ENCODE measurements at regions of chr3 and their contacts with region 1.

Region 1: GRCh38 chr3:187738331-187739093 is 6.8 kb downstream of the BCL6 start:
- DNase-seq: peak; percentile 67
- H3K4me3 Mint-ChIP-seq: peak overlapping the region; percentile 96
- H3K27ac Mint-ChIP-seq: peak overlapping the region; percentile 92
- H3K4me1 Mint-ChIP-seq: peaks cover 71% of the 10 kb centered on the region
- H3K27me3 Mint-ChIP-seq: no peaks in the 10 kb centered on the region

Region 2: GRCh38 chr3:187227658-187228258 is 510.8 kb before region 1 on chr3:
- intact Hi-C with region 1: no loop called
- DNase-seq: no peak
- H3K4me3 Mint-ChIP-seq: no peak overlapping the region
- H3K27ac Mint-ChIP-seq: no peak overlapping the region
- H3K4me1 Mint-ChIP-seq: no peaks in the 10 kb centered on the region
- H3K27me3 Mint-ChIP-seq: peaks cover 5% of the 10 kb centered on the region

Region 3: GRCh38 chr3:188154014-188154808 is 415.7 kb after region 1 on chr3 and contains the start of gene LPP:
- intact Hi-C with region 1: loop called (anchors 1 kb)
- DNase-seq: peak; percentile 90
- H3K4me3 Mint-ChIP-seq: peak within 1 kb of the TSS; percentile 89
- H3K27ac Mint-ChIP-seq: peak within 1 kb of the TSS; percentile 87
- H3K4me1 Mint-ChIP-seq: peaks cover 71% of the 10 kb centered on the region
- H3K27me3 Mint-ChIP-seq: no peaks in the 10 kb centered on the region
- total RNA-seq, gene LPP: 38.2 and 46.4 TPM in 2 replicates

Region 4: DNA sequence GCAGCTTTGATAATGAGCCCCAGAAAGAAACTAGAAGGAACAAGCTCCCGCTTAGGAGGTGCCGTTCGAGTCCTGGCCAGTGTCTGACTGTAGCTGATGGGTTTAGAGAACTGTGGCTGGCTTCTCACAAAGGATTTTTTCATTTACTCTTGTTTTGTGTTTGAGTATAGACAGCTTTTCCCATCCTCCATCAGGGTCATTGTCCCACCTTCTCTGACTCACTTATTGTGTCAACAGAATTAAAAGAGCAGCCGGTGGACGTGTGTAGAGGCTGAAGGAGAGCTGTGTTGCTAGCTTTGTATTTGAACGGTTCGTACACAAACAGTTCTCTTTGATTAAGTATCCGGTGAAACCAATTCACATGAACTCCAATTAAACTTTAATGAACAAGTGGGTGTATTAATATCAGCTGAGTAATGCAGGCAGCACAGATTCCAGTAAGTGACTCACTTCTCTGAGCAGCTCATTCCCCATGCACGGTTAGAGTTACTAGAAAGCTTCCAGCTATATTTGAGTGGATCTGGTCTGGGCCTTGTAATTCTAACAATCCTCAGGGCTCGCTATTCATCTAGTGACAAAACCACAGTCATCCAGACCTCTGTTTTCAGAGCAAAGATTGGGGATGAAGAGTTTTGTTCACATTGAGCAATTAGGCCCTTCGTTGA is 556.4 kb after region 1 on chr3:
- intact Hi-C with region 1: loop called (anchors 1 kb)
- DNase-seq: no peak
- H3K4me3 Mint-ChIP-seq: no peak overlapping the region
- H3K27ac Mint-ChIP-seq: peak overlapping the region; percentile 33
- H3K4me1 Mint-ChIP-seq: peaks cover 86% of the 10 kb centered on the region
- H3K27me3 Mint-ChIP-seq: no peaks in the 10 kb centered on the region

Region 5: GRCh38 chr3:188400494-188401243 is 662.2 kb after region 1 on chr3:
- intact Hi-C with region 1: loop called (anchors 1 kb)
- DNase-seq: peak; percentile 22
- H3K4me3 Mint-ChIP-seq: no peak overlapping the region
- H3K27ac Mint-ChIP-seq: peak overlapping the region; percentile 63
- H3K4me1 Mint-ChIP-seq: peaks cover 73% of the 10 kb centered on the region
- H3K27me3 Mint-ChIP-seq: peaks cover 4% of the 10 kb centered on the region

Region 6: DNA sequence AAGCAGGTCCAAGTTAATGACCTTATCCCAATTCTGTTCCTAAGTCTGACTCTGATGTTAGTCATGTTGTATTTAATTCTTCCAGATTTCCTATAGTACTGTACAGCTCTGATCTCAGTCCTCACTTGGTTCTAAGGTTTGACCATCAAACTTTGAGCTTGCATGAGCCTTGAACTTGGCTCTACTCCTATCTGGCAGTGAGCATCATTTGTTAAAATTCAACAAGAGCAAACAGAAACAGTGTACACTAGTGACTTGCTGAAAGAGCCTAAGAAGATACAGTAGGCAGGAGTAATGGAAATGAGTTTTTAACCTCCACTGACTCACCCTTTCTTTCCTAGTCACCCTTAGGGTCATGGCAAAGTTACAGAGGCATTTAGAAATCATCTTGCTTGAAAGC is 982.1 kb after region 1 on chr3:
- intact Hi-C with region 1: loop called (anchors 2 kb)
- DNase-seq: no peak
- H3K4me3 Mint-ChIP-seq: no peak overlapping the region
- H3K27ac Mint-ChIP-seq: no peak overlapping the region
- H3K4me1 Mint-ChIP-seq: peaks cover 35% of the 10 kb centered on the region
- H3K27me3 Mint-ChIP-seq: peaks cover 2% of the 10 kb centered on the region

Region 7: DNA sequence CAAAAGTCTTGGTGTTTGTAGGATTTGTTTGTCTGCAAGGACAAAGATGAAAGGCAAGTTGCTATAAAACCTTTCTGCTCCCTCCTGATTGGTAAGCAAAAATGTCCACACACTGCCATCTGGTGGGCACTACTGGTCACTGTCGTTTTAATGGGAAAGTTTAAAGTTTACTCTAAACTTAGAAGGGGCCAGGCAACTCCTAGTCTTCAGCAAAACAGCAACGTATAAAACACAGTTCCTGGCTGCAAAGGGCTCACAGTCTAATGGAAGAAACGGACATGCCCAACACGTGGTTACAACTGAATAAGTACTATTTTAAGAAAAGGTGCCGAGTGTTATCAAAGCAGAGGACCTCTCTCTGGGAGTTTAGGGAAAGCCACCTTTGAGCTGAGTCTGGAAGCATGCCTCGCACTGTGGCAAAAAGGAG is 1409.6 kb after region 1 on chr3:
- intact Hi-C with region 1: loop called (anchors 1 kb)
- DNase-seq: peak; percentile 43
- H3K4me3 Mint-ChIP-seq: no peak overlapping the region
- H3K27ac Mint-ChIP-seq: no peak overlapping the region
- H3K4me1 Mint-ChIP-seq: peaks cover 47% of the 10 kb centered on the region
- H3K27me3 Mint-ChIP-seq: peaks cover 6% of the 10 kb centered on the region